Activated B cell treated with CpG ODN at 0.5 μM for 24 hours (primary cell): ENCODE measurements at regions of chr2 and their contacts with region 1.

Region 1: GRCh38 chr2:98664327-98664726 is 55.9 kb downstream of the UNC50 start:
- DNase-seq: no peak
- ATAC-seq: peak; percentile 37
- H3K4me3 Mint-ChIP-seq: no peak overlapping the region
- H3K27ac Mint-ChIP-seq: peak overlapping the region; percentile 25
- H3K4me1 Mint-ChIP-seq: peaks cover 15% of the 10 kb centered on the region
- H3K27me3 Mint-ChIP-seq: no peaks in the 10 kb centered on the region
- CTCF ChIP-seq: no peak

Region 2: DNA sequence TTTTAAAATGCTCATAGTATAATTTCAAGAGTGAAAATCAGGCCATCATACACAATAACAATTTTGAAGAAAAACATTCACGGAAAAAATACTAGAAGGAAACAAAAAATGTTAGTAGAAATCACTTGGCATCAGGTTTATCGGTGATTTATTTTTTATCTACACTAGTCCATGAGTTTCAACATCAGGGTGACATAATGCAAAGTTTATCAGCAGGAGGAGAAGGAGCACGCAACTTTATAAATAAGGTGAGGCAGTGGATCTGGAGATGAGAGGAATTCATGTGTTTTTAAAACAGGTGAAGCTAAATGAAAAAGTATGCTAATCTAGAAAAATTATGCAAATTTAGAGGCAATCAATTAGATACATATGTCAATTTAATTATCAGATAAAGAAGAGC is 12.4 kb after region 1 on chr2:
- CTCF ChIA-PET with region 1: no interaction called
- POLR2A ChIA-PET with region 1: interaction called, 11 read pairs
- intact Hi-C with region 1: no loop called
- DNase-seq: no peak
- ATAC-seq: no peak
- H3K4me3 Mint-ChIP-seq: no peak overlapping the region
- H3K27ac Mint-ChIP-seq: no peak overlapping the region
- H3K4me1 Mint-ChIP-seq: no peaks in the 10 kb centered on the region
- H3K27me3 Mint-ChIP-seq: no peaks in the 10 kb centered on the region
- CTCF ChIP-seq: no peak

Region 3: DNA sequence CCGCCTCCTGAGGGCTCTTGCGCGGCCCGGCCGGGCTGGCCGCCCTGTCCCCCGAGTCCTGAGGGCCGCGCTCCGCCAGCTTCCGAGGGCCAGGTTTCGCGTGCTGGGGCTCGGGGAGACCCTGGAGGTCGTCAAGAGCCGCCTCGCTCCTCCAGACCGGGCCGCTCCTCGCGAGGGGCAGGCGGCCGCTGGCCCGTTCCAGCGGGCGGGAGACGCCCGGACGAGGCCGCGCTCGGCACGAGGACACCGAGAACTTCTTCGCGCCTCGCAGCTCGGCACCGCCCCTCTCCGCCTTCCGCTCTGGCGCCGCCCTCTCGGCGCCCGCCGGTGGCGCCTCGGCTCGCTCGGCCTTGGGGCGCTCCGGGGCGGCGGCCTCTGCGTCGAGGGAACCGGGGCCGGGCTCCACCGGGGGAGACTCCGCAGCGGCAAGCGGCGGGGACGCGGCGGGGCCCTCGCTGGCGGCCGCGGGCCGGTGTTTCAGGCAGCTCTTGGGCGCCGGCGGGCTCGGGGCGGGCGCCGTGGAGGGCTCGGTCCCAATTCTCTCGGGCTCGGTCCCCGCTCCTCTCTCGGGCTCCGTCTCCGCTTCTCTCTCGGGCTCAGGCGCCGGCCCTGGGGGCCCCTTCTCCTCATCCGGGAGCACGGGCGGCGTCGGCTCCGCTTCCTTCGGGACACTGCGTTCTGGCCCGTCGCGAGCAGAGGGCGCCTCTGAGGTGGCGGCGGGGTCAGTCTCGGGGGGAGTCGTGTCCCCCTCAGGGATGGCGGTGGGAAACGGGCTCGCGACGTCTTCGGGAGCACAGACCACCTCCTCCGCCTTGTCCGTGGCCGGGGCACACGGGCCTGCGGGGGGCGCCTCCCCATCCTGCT is 158.2 kb after region 1 on chr2:
- CTCF ChIA-PET with region 1: no interaction called
- POLR2A ChIA-PET with region 1: no interaction called
- intact Hi-C with region 1: loop called (anchors 5 kb)
- DNase-seq: peak; percentile 41
- ATAC-seq: peak; percentile 80
- H3K4me3 Mint-ChIP-seq: peak overlapping the region; percentile 57
- H3K27ac Mint-ChIP-seq: no peak overlapping the region
- H3K4me1 Mint-ChIP-seq: peaks cover 16% of the 10 kb centered on the region
- H3K27me3 Mint-ChIP-seq: peaks cover 5% of the 10 kb centered on the region
- CTCF ChIP-seq: no peak